ENCODE measurements at regions of chr14 and their contacts with region 1.

Region 1: DNA sequence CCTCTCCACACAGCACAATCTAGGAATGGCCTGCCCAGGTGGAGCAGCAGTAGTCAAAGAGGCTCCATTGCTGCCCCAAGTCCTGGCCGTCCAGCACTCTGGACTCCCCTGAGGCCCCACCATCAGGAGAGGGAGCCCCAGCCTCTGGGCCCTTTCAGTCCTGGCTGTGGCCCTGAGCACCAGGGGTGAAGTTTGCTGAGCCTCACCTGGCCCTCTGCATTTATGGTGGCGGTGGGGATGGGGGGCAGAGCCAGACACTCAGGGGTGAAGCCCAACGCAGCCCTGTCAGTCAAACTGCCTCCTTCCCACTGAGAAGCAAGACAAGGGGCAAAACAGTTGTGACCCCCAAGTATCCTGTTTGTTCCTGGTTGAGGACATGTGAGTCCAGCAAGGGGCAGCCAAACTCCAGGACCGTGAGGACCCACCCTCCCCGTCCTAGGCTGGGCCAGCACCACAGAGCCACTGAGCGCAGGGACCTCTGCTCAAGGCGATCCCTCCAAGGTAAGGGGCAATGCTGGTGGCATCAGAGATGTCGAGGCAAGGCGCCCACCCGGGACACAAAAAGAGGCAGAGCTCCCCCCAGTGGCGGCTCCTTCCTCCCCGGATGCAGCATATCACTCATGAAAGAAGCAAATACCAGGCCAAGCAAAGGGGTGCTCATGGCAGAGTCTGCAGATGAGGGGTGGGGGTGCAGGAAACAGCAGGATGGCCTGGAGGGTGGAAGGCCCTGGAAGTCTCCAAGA is 4.8 kb upstream of the AMN start:
- DNase-seq: peak in 1 of 5 donors; percentile 67
- ATAC-seq: peak in 2 of 4 donors; percentile 45 to 50
- H3K4me3 ChIP-seq: no peak overlapping the region
- H3K27ac ChIP-seq: no peak overlapping the region
- H3K4me1 ChIP-seq: peaks cover 0 to 2% (median 0%) of the 10 kb centered on the region in 12 donors
- H3K27me3 ChIP-seq: peaks cover under 1 to 10% (median 7%) of the 10 kb centered on the region in 9 donors
- CTCF ChIP-seq: peak; percentile 44 to 68 (median 57)
- POLR2A ChIP-seq: no peak

Region 2: GRCh38 chr14:102437997-102438915 is 479.4 kb before region 1 on chr14:
- intact Hi-C with region 1: loop called in 1 of 10 experiments (anchors 10 kb)
- DNase-seq: peak; percentile 89 to 92 (median 90)
- ATAC-seq: peak; percentile 88 to 97 (median 96)
- H3K4me3 ChIP-seq: peak overlapping the region in 9 of 12 donors; percentile 2 to 49 (median 39)
- H3K27ac ChIP-seq: peak overlapping the region in 4 of 12 donors; percentile 17 to 61 (median 30)
- H3K4me1 ChIP-seq: peaks cover 0 to 10% (median 3%) of the 10 kb centered on the region in 12 donors
- H3K27me3 ChIP-seq: no peaks in the 10 kb centered on the region
- CTCF ChIP-seq: peak; percentile 67 to 92 (median 81)
- POLR2A ChIP-seq: no peak

Region 3: GRCh38 chr14:102708494-102708893 is 209.1 kb before region 1 on chr14:
- intact Hi-C with region 1: loop called in 1 of 10 experiments (anchors 10 kb)
- DNase-seq: no peak
- ATAC-seq: no peak
- H3K4me3 ChIP-seq: no peak overlapping the region
- H3K27ac ChIP-seq: no peak overlapping the region
- H3K4me1 ChIP-seq: no peaks in the 10 kb centered on the region
- H3K27me3 ChIP-seq: no peaks in the 10 kb centered on the region
- CTCF ChIP-seq: no peak
- POLR2A ChIP-seq: no peak

Region 4: DNA sequence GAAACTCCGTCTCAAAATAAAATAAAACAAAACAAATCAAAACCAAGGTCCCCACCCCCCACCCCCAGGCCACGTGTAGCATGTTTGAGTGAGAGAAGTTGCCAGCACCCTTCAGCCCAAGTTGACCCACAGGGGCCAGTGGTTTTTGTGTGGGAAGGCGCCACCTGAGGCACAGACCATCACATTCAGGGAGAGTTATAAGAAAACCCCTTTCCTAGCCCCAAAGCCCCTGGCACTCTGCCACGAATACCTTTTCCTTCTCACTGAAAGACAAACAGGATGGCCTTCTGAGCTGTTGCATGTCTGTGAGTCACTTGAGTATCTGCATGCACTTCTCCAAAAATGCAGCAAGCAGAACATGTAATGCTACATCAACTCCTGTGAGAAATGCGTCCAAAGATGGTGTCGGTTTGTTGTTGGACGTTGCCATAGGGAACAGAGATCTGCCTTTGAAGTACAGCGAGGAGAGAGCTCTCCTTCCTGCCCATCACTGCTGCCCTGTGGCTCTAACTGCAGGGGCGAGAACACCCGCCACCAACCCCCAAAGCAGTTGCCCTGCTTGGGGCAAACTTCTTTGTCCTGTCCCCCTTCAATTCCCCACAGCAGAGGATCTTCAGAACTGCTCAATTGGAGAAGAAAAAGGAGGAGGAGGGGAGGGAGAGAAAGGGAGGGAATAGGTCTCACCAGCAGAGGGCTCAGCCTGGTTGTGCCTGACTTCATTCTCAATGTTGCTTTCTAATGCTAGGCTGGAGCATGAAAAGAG is 143.1 kb before region 1 on chr14:
- intact Hi-C with region 1: loop called in 6 of 10 experiments (anchors 5 to 10 kb)
- DNase-seq: peak in 2 of 5 donors; percentile 35 to 40
- ATAC-seq: peak in 3 of 4 donors; percentile 56 to 76 (median 62)
- H3K4me3 ChIP-seq: no peak overlapping the region
- H3K27ac ChIP-seq: no peak overlapping the region
- H3K4me1 ChIP-seq: peaks cover 0 to 31% (median 8%) of the 10 kb centered on the region in 12 donors
- H3K27me3 ChIP-seq: peaks cover 0 to 7% (median 0%) of the 10 kb centered on the region in 9 donors
- CTCF ChIP-seq: peak; percentile 44 to 74 (median 60)
- POLR2A ChIP-seq: no peak

Region 5: DNA sequence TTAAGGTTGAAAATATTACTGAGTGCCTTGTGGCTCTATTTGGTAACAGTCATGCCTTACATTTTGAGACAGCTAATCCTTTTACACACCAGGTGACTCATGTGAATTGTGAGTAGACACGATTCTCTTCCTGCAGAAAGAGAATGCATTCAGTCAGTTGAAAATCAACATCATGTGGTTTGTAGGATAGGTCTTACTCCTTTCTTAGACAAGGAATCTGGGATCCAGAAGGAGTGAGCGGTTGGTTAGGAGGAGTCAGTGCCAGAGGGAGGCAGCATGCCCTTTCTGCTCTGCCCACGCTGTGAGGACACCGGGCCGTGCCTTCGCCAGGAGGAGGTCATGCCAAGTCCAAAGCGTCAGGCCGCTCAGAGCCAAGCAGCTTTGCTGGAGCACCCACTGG is 92.8 kb before region 1 on chr14:
- intact Hi-C with region 1: loop called in 3 of 10 experiments (anchors 5 kb)
- DNase-seq: peak; percentile 51 to 83 (median 79)
- ATAC-seq: peak; percentile 95 to 98 (median 98)
- H3K4me3 ChIP-seq: no peak overlapping the region
- H3K27ac ChIP-seq: no peak overlapping the region
- H3K4me1 ChIP-seq: peaks cover 0 to 13% (median 0%) of the 10 kb centered on the region in 12 donors
- H3K27me3 ChIP-seq: no peaks in the 10 kb centered on the region
- CTCF ChIP-seq: peak in 8 of 12 donors; percentile 17 to 43 (median 28)
- POLR2A ChIP-seq: no peak

Region 6: GRCh38 chr14:102900631-102901571 is 16.7 kb before region 1 on chr14:
- intact Hi-C with region 1: no loop called
- DNase-seq: no peak
- ATAC-seq: peak; percentile 44 to 68 (median 60)
- H3K4me3 ChIP-seq: peak overlapping the region in 7 of 12 donors; percentile 2 to 30 (median 19)
- H3K27ac ChIP-seq: peak overlapping the region in 2 of 12 donors; percentile 14 to 37
- H3K4me1 ChIP-seq: peaks cover 0 to 16% (median 0%) of the 10 kb centered on the region in 12 donors
- H3K27me3 ChIP-seq: no peaks in the 10 kb centered on the region
- CTCF ChIP-seq: no peak
- POLR2A ChIP-seq: no peak